Heart right ventricle (tissue), 16 donors: ENCODE measurements at regions of chr14 and their contacts with region 1.

Region 1: GRCh38 chr14:20682435-20683124 is 1.8 kb upstream of the RNASE4 start:
- DNase-seq: peak; percentile 88 to 93
- ATAC-seq: peak; percentile 89 to 95 (median 92)
- H3K4me3 ChIP-seq: peak overlapping the region; percentile 67 to 99 (median 89)
- H3K27ac ChIP-seq: peak overlapping the region; percentile 98 to 100 (median 100)
- H3K4me1 ChIP-seq: peaks cover 0 to 63% (median 16%) of the 10 kb centered on the region in 9 donors
- H3K27me3 ChIP-seq: no peaks in the 10 kb centered on the region
- CTCF ChIP-seq: peak in 4 of 9 donors; percentile 1 to 45 (median 21)

Region 2: DNA sequence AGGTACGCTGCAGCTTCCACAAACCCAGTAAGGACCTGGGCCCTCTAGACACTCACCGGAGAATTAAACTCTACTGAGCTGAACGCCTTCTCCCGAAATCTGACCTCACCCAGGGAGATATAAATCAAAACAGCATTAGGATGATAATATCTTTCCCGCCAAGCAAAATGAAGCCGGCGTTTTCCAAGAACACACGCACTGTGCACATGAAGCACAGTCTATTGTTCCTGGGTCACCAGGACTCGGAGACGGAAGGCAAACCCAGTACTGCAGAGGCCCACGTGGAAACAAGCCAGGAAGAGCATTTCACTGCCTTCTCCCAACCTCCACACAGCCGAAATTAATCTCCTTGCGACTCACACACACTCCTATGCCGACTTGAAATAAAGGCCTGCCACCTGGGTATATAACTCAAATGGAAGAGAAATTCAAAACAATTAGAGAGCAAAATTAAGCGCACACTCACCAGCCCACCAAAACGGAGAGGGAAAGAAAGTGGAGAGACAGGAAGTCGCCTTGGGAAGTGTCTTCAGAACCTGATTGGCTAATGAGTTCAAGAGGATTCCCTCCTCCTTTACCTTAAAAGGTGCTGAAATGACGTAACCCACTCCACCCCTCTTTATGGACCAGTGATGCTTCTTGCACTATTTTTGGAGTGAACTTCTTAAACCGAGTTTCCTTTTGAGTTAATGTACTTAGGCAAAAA is 349.6 kb before region 1 on chr14 and contains the start of gene CCNB1IP1:
- intact Hi-C with region 1: loop called in 6 of 10 experiments (anchors 2 to 10 kb)
- DNase-seq: peak; percentile 29 to 83
- ATAC-seq: peak; percentile 96 to 100 (median 99)
- H3K4me3 ChIP-seq: peak within 1 kb of the TSS; percentile 29 to 75 (median 68)
- H3K27ac ChIP-seq: peak within 1 kb of the TSS; percentile 49 to 89 (median 84)
- H3K4me1 ChIP-seq: peaks cover 0 to 28% (median 23%) of the 10 kb centered on the region in 9 donors
- H3K27me3 ChIP-seq: no peaks in the 10 kb centered on the region
- CTCF ChIP-seq: no peak
- total RNA-seq, gene CCNB1IP1: 35.7 to 69.9 (median 56.0) TPM

Region 3: DNA sequence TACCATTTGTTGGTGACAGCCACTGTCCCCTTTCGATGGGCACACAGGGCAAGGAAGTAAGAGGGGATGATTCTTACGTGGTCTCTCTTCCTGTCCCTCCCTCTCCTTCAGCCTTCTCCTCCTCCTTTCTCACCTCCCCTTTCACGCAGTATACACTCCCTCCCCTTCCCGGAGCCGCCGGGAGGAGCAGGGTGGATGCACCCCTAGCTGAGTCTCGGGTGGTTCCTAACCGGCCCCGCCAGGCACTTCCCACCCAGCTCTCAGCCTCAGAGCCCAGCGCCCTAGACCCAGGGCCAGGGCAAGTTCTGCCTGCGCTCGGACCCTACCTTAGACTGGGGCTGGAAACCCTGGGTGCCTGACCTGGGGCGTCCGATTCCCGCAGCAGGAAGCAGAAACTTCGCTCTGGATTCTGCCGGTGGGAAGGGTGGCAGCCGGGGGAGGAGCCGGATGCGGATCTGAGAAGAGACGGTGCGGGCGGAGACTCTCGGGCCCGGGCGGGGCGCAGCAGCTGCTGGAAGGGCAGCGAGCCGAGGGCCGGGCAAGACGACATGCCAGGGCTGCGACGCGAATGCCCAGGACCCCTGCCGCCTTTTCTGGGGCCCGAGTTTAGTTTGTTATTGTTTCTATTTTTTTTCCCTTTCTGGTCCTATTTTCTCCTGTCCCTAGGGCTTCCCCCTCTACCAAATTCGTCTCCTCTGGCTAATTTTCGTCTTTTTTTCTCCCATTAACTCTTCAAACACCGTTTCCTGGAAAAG is 269.4 kb before region 1 on chr14 and contains the start of gene TEP1:
- intact Hi-C with region 1: loop called in 6 of 10 experiments (anchors 2 to 10 kb)
- DNase-seq: peak; percentile 89
- ATAC-seq: peak; percentile 94 to 98 (median 98)
- H3K4me3 ChIP-seq: peak within 1 kb of the TSS; percentile 63 to 92 (median 75)
- H3K27ac ChIP-seq: peak within 1 kb of the TSS; percentile 40 to 98 (median 95)
- H3K4me1 ChIP-seq: peaks cover 0 to 35% (median 13%) of the 10 kb centered on the region in 9 donors
- H3K27me3 ChIP-seq: no peaks in the 10 kb centered on the region
- CTCF ChIP-seq: no peak
- total RNA-seq, gene TEP1: 6.9 to 17.8 (median 8.6) TPM

Region 4: GRCh38 chr14:20469890-20470602 is 212.5 kb before region 1 on chr14:
- intact Hi-C with region 1: loop called in 3 of 10 experiments (anchors 5 to 10 kb)
- DNase-seq: peak in 1 of 2 donors; percentile 31
- ATAC-seq: peak; percentile 50 to 87 (median 72)
- H3K4me3 ChIP-seq: peak overlapping the region; percentile 48 to 97 (median 70)
- H3K27ac ChIP-seq: peak overlapping the region; percentile 52 to 97 (median 88)
- H3K4me1 ChIP-seq: peaks cover 0 to 43% (median 26%) of the 10 kb centered on the region in 9 donors
- H3K27me3 ChIP-seq: no peaks in the 10 kb centered on the region
- CTCF ChIP-seq: no peak

Region 5: GRCh38 chr14:20624495-20625070 is 58.0 kb before region 1 on chr14:
- intact Hi-C with region 1: loop called in 2 of 10 experiments (anchors 2 to 5 kb)
- DNase-seq: peak; percentile 32 to 41
- ATAC-seq: peak in 7 of 8 donors; percentile 46 to 69 (median 60)
- H3K4me3 ChIP-seq: peak overlapping the region in 8 of 10 donors; percentile 7 to 46 (median 29)
- H3K27ac ChIP-seq: no peak overlapping the region
- H3K4me1 ChIP-seq: peaks cover 0 to 54% (median 19%) of the 10 kb centered on the region in 9 donors
- H3K27me3 ChIP-seq: peaks cover 0 to 85% (median 18%) of the 10 kb centered on the region in 7 donors
- CTCF ChIP-seq: no peak

Region 6: GRCh38 chr14:20811986-20812975 is 129.7 kb after region 1 on chr14:
- intact Hi-C with region 1: no loop called
- DNase-seq: peak in 1 of 2 donors; percentile 33
- ATAC-seq: peak in 5 of 8 donors; percentile 38 to 52 (median 41)
- H3K4me3 ChIP-seq: no peak overlapping the region
- H3K27ac ChIP-seq: peak overlapping the region in 4 of 10 donors; percentile 5 to 75 (median 33)
- H3K4me1 ChIP-seq: peaks cover 0 to 30% (median 7%) of the 10 kb centered on the region in 9 donors
- H3K27me3 ChIP-seq: no peaks in the 10 kb centered on the region
- CTCF ChIP-seq: no peak

Region 7: GRCh38 chr14:21103710-21104447 is 421.3 kb after region 1 on chr14:
- intact Hi-C with region 1: loop called in 2 of 10 experiments (anchors 10 kb)
- DNase-seq: peak; percentile 94 to 97
- ATAC-seq: peak; percentile 95 to 98 (median 97)
- H3K4me3 ChIP-seq: peak overlapping the region; percentile 50 to 80 (median 64)
- H3K27ac ChIP-seq: peak overlapping the region; percentile 90 to 99 (median 97)
- H3K4me1 ChIP-seq: peaks cover 6 to 58% (median 42%) of the 10 kb centered on the region in 9 donors
- H3K27me3 ChIP-seq: no peaks in the 10 kb centered on the region
- CTCF ChIP-seq: peak; percentile 70 to 92 (median 81)